ENCODE measurements at regions of chr9 and their contacts with region 1.

Region 1: GRCh38 chr9:69190086-69190862 is 16.2 kb downstream of the TJP2 start:
- DNase-seq: no peak
- ATAC-seq: no peak
- H3K4me3 ChIP-seq: no peak overlapping the region
- H3K27ac ChIP-seq: no peak overlapping the region
- H3K4me1 ChIP-seq: peaks cover 14% of the 10 kb centered on the region
- H3K27me3 ChIP-seq: no peaks in the 10 kb centered on the region
- CTCF ChIP-seq: no peak
- POLR2A ChIP-seq: no peak
- RAD21 ChIP-seq: no peak

Region 2: GRCh38 chr9:69035438-69036308 is 154.6 kb before region 1 on chr9 and contains the start of gene FXN:
- CTCF ChIA-PET with region 1: interaction called, 12 read pairs
- POLR2A ChIA-PET with region 1: no interaction called
- dilution Hi-C with region 1: no loop called
- in situ Hi-C with region 1: no loop called
- intact Hi-C with region 1: loop called (anchors 5 kb)
- DNase-seq: peak; percentile 75
- ATAC-seq: peak; percentile 97
- H3K4me3 ChIP-seq: peak within 1 kb of the TSS; percentile 87
- H3K27ac ChIP-seq: peak within 1 kb of the TSS; percentile 91
- H3K4me1 ChIP-seq: peaks cover 2% of the 10 kb centered on the region; the same call in 1 of the 2 replicates
- H3K27me3 ChIP-seq: no peaks in the 10 kb centered on the region
- CTCF ChIP-seq: peak; percentile 98
- POLR2A ChIP-seq: peak; percentile 62; the same call in 1 of the 2 replicates
- RAD21 ChIP-seq: peak; percentile 69
- total RNA-seq, gene FXN: 3.9 and 6.1 TPM in 2 replicates

Measured in IMR-90 (cell line).